MCF 10A (cell line): ENCODE measurements at regions of chr11 and their contacts with region 1.

Region 1: GRCh38 chr11:65013692-65014145 is 241 bp upstream of the ARL2 start:
- DNase-seq: peak; percentile 82
- H3K4me3 Mint-ChIP-seq: peak overlapping the region; percentile 83
- H3K27ac Mint-ChIP-seq: peak overlapping the region; percentile 63
- H3K4me1 Mint-ChIP-seq: peaks cover 16% of the 10 kb centered on the region
- H3K27me3 Mint-ChIP-seq: no peaks in the 10 kb centered on the region
- CTCF ChIP-seq: no peak

Region 2: DNA sequence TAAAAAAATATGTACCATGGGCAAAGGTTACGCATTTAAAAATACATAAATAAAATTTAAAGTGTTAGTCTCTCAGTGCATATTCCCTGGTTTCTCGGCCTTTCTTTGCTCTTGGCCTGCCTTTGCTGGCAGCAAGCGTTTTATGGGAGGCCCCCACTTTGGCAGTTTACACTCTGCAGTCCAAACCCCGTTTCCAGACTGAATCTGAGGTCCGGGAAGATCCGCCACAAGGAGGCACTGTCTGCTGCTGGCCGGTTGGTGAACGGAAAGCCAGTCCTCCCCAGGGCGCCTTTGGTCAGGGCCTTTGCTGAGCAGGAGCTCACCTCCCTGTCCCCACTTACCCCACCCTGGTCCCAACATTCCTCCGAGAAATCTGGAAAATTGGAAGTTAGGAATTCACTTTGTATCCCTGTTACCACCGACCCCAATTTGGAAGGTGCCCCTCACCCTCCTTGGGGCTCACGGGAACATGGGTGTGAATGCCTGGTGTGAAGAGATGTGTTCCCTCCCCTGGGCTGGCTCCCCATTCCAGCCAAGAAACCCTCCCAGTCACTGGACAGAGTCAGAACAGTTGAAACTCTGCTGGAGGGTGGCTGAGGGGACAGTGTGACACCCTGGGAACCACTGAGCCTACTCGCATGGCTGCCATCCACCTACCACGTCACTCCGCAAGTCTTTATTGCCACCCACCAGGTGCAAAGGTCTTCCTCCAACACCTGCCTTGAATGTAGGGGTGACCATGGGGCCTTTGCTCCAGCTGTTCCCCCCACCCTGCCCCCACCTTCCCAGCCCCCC is 226.0 kb before region 1 on chr11:
- CTCF ChIA-PET with region 1: interaction called, 3 read pairs
- POLR2A ChIA-PET with region 1: no interaction called
- intact Hi-C with region 1: loop called (anchors 10 kb)
- DNase-seq: peak; percentile 66
- H3K4me3 Mint-ChIP-seq: no peak overlapping the region
- H3K27ac Mint-ChIP-seq: no peak overlapping the region
- H3K4me1 Mint-ChIP-seq: no peaks in the 10 kb centered on the region
- H3K27me3 Mint-ChIP-seq: no peaks in the 10 kb centered on the region
- CTCF ChIP-seq: peak; percentile 81

Region 3: GRCh38 chr11:64924102-64924851 is 89.4 kb before region 1 on chr11 and contains the start of gene PPP2R5B:
- CTCF ChIA-PET with region 1: interaction called, 8 read pairs
- POLR2A ChIA-PET with region 1: interaction called, 10 read pairs
- intact Hi-C with region 1: no loop called
- DNase-seq: peak; percentile 95
- H3K4me3 Mint-ChIP-seq: peak within 1 kb of the TSS; percentile 98
- H3K27ac Mint-ChIP-seq: peak within 1 kb of the TSS; percentile 98
- H3K4me1 Mint-ChIP-seq: peaks cover 14% of the 10 kb centered on the region
- H3K27me3 Mint-ChIP-seq: no peaks in the 10 kb centered on the region
- CTCF ChIP-seq: no peak
- total RNA-seq, gene PPP2R5B: 38.0 and 48.0 TPM in 2 replicates

Region 4: GRCh38 chr11:65040847-65041621 is 27.3 kb after region 1 on chr11 and contains the start of gene SAC3D1:
- CTCF ChIA-PET with region 1: interaction called, 10 read pairs
- POLR2A ChIA-PET with region 1: interaction called, 11 read pairs
- intact Hi-C with region 1: no loop called
- DNase-seq: peak; percentile 93
- H3K4me3 Mint-ChIP-seq: peak within 1 kb of the TSS; percentile 89
- H3K27ac Mint-ChIP-seq: peak within 1 kb of the TSS; percentile 84
- H3K4me1 Mint-ChIP-seq: peaks cover 10% of the 10 kb centered on the region
- H3K27me3 Mint-ChIP-seq: no peaks in the 10 kb centered on the region
- CTCF ChIP-seq: no peak
- total RNA-seq, gene SAC3D1: 10.3 and 14.0 TPM in 2 replicates

Region 5: DNA sequence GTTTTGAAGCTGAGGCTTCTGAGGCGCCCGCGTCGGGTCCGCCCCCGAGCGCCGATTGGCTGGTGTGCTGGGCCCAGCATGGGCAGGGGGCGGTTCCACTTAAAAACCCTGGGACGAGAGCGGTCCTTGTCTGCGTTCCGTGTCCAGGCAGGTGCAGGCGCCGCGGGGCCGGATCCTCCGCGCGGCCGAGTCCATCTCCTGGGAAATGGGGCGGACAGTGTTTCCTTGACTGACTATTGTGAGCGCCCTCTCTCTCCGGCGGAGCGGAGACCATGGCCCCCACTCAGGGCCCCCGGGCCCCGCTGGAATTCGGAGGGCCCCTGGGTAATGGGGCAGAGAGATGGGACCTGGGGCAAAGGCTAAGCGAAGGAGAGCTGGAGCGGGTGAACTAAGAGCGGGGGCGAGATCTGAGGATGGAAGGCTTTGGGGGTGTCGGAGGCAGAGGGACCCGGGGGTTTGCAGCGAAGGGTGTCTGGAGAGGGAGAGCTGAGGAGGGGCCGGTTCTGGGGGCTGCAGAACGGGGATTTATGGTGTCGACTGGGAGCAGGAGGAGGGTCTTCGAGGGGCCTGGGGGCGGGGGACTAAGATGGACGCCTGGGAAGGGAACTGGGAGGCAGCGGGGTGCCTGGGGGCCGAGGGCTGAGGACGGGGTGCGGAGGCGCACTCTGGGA is 98.2 kb after region 1 on chr11 and contains the start of gene TM7SF2:
- CTCF ChIA-PET with region 1: interaction called, 13 read pairs
- POLR2A ChIA-PET with region 1: interaction called, 12 read pairs
- intact Hi-C with region 1: loop called (anchors 2 kb)
- DNase-seq: peak; percentile 96
- H3K4me3 Mint-ChIP-seq: peak within 1 kb of the TSS; percentile 93
- H3K27ac Mint-ChIP-seq: peak within 1 kb of the TSS; percentile 94
- H3K4me1 Mint-ChIP-seq: peaks cover 11% of the 10 kb centered on the region
- H3K27me3 Mint-ChIP-seq: no peaks in the 10 kb centered on the region
- CTCF ChIP-seq: no peak
- total RNA-seq, gene TM7SF2: 8.5 and 14.0 TPM in 2 replicates

Region 6: GRCh38 chr11:65261591-65262380 is 248.1 kb after region 1 on chr11 and contains the start of gene POLA2:
- CTCF ChIA-PET with region 1: no interaction called
- POLR2A ChIA-PET with region 1: no interaction called
- intact Hi-C with region 1: loop called (anchors 5 kb)
- DNase-seq: peak; percentile 96
- H3K4me3 Mint-ChIP-seq: peak within 1 kb of the TSS; percentile 81
- H3K27ac Mint-ChIP-seq: peak within 1 kb of the TSS; percentile 95
- H3K4me1 Mint-ChIP-seq: peaks cover 9% of the 10 kb centered on the region
- H3K27me3 Mint-ChIP-seq: no peaks in the 10 kb centered on the region
- CTCF ChIP-seq: no peak
- total RNA-seq, gene POLA2: 8.8 and 10.3 TPM in 2 replicates